Activated CD8-positive, alpha-beta memory T cell treated with anti-CD3 and anti-CD28 coated beads, Interleukin-2, amount 10 ng/mL, durations not matched to agents 7 days and 5 days (primary cell): ENCODE measurements at regions of chr19 and their contacts with region 1.

Region 1: GRCh38 chr19:18521885-18522624 is at the start of gene ELL:
- DNase-seq: peak; percentile 100
- ATAC-seq: peak; percentile 91
- H3K4me3 Mint-ChIP-seq: peak within 1 kb of the TSS; percentile 92
- H3K27ac Mint-ChIP-seq: peak within 1 kb of the TSS; percentile 93
- H3K4me1 Mint-ChIP-seq: peaks cover 22% of the 10 kb centered on the region
- H3K27me3 Mint-ChIP-seq: no peaks in the 10 kb centered on the region
- total RNA-seq, gene ELL: 22.9 to 33.7 TPM

Region 2: GRCh38 chr19:18259893-18260292 is 262.2 kb before region 1 on chr19:
- CTCF ChIA-PET with region 1: no interaction called
- DNase-seq: no peak
- ATAC-seq: no peak
- H3K4me3 Mint-ChIP-seq: no peak overlapping the region
- H3K27ac Mint-ChIP-seq: no peak overlapping the region
- H3K4me1 Mint-ChIP-seq: no peaks in the 10 kb centered on the region
- H3K27me3 Mint-ChIP-seq: peaks cover 3% of the 10 kb centered on the region

Region 3: GRCh38 chr19:18478569-18479311 is 43.3 kb before region 1 on chr19:
- CTCF ChIA-PET with region 1: interaction called, 11 read pairs
- DNase-seq: peak; percentile 84
- ATAC-seq: peak; percentile 57
- H3K4me3 Mint-ChIP-seq: no peak overlapping the region
- H3K27ac Mint-ChIP-seq: peak overlapping the region; percentile 86
- H3K4me1 Mint-ChIP-seq: peaks cover 91% of the 10 kb centered on the region
- H3K27me3 Mint-ChIP-seq: no peaks in the 10 kb centered on the region

Region 4: DNA sequence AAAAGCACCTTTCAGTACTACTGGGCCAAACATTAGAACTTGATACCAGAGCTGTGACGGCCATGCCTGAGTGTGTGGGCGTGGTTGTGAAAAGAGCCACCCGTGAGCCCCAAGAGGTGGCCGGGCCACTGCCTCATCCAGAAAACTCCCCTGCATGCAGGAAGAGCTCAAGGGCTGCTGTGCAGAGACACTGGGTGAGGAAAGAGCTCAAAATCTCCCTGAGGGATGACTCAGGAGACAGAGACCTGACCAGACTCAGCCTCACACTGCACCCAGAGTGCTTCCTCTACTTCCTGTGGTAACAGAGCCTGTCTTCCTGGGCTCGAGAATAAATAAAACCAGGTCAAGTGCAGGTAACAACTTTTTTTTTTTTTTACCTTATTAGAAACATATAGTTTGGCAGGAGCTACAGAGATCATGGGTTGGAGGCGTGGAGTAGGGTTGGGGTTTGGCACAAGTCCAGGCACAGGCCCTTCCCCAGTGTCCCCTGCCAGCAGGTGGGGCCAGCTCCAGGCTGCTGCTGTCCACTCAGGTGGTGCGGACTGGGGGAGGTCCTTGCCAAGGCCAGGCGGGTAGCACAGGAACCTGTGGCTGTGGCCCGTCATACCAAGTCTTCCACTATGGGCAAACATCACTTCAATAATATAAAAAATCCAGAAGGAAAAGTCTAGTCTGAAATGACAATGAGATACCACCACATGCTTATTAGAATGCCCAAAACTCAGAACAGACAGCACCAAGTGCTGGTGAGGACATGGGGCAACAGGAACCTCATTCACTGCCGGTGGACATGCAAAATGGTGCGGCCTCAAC is 25.7 kb before region 1 on chr19:
- CTCF ChIA-PET with region 1: interaction called, 145 read pairs
- DNase-seq: peak; percentile 83
- ATAC-seq: peak; percentile 83
- H3K4me3 Mint-ChIP-seq: peak overlapping the region; percentile 57
- H3K27ac Mint-ChIP-seq: peak overlapping the region; percentile 95
- H3K4me1 Mint-ChIP-seq: peaks cover 81% of the 10 kb centered on the region
- H3K27me3 Mint-ChIP-seq: no peaks in the 10 kb centered on the region

Region 5: GRCh38 chr19:18542936-18543815 is 21.1 kb after region 1 on chr19 and contains the start of gene FKBP8:
- CTCF ChIA-PET with region 1: interaction called, 18 read pairs
- DNase-seq: peak; percentile 97
- ATAC-seq: peak; percentile 97
- H3K4me3 Mint-ChIP-seq: peak within 1 kb of the TSS; percentile 88
- H3K27ac Mint-ChIP-seq: peak within 1 kb of the TSS; percentile 98
- H3K4me1 Mint-ChIP-seq: peaks cover 27% of the 10 kb centered on the region
- H3K27me3 Mint-ChIP-seq: no peaks in the 10 kb centered on the region
- total RNA-seq, gene FKBP8: 220 to 286 TPM

Region 6: GRCh38 chr19:18571564-18572300 is 49.7 kb after region 1 on chr19 and contains the start of gene UBA52:
- CTCF ChIA-PET with region 1: interaction called, 30 read pairs
- DNase-seq: peak; percentile 99
- ATAC-seq: peak; percentile 93
- H3K4me3 Mint-ChIP-seq: peak within 1 kb of the TSS; percentile 85
- H3K27ac Mint-ChIP-seq: peak within 1 kb of the TSS; percentile 91
- H3K4me1 Mint-ChIP-seq: peaks cover 34% of the 10 kb centered on the region
- H3K27me3 Mint-ChIP-seq: no peaks in the 10 kb centered on the region
- total RNA-seq, gene UBA52: 1,256 to 1,325 TPM

Region 7: GRCh38 chr19:18613589-18614234 is 91.7 kb after region 1 on chr19:
- CTCF ChIA-PET with region 1: no interaction called
- DNase-seq: no peak
- ATAC-seq: no peak
- H3K4me3 Mint-ChIP-seq: no peak overlapping the region
- H3K27ac Mint-ChIP-seq: no peak overlapping the region
- H3K4me1 Mint-ChIP-seq: peaks cover 9% of the 10 kb centered on the region
- H3K27me3 Mint-ChIP-seq: peaks cover 60% of the 10 kb centered on the region